GM13977 (cell line): ENCODE measurements at regions of chr5 and their contacts with region 1.

Region 1: GRCh38 chr5:114449860-114450421 is 88.1 kb downstream of the KCNN2 start:
- DNase-seq: peak; percentile 65
- CTCF ChIP-seq: peak; percentile 96

Region 2: GRCh38 chr5:113678924-113679575 is 770.9 kb before region 1 on chr5:
- in situ Hi-C with region 1: loop called (anchors 25 kb)
- DNase-seq: peak; percentile 24
- CTCF ChIP-seq: peak; percentile 81

Region 3: DNA sequence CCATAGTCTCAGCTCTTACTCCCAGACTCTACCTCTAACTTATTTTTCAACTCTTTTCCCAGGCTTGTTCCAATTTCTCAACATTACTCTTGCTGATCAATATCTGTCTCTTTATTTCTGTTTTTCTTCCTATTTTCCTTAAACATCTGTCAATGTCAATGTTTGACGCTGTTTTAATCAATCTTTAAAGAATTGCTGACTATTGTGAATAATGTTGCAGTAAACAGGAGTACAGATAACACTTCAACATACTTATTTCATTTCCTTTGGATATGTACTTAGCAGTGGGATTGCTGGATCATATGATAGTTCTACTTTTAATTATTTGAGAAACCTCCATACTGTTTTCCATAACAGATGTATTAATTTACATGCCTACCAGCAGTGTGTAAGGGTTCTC is 490.8 kb after region 1 on chr5:
- in situ Hi-C with region 1: no loop called
- DNase-seq: no peak
- CTCF ChIP-seq: no peak

Region 4: DNA sequence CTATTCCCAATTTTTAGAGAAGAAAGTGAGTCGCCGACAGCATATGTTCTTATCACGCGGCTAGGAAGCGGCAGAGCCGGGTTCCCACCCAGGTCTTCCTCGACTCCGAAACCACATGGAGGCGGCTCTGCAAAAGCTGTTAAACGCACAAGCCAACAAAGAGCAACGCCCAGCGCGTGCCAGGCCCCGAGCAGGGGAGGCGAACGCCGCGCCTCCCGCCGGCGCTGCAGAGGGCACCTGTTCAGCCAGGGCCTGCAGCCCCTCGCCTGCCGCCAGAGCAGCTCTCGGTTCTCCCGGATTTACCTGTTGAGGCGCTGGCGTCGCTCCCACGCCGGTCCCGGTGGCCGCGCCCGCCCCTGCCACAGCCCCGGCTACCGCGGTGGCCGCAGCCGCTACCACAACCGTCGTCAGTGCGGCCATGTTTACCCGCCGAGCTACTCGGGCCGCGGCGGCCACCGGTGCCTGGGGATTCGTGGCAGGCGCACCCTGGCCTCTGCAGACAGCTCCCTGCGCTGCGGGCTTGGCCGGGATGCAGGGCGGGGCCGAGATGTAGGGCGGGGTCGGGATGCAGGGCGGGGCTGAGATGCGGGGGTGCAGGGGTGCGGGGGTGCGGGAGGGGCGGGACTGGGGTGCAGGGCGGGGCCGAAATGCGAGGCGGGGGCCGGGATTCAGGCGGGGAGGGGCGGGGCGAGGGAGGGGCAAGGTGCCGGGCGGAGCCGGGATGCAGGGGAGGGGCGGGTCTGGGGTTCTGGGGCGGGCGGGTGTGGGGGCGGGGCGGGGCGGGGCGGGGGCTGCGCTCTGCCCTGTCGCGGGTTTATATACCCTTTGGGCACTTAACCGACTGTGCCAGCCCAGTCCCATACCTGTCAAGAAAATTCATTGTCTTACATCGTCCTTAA is 846.4 kb after region 1 on chr5 and contains the start of gene CCDC112:
- in situ Hi-C with region 1: no loop called
- DNase-seq: peak; percentile 96
- CTCF ChIP-seq: no peak